ENCODE measurements at regions of chr9 and their contacts with region 1.

Region 1: GRCh38 chr9:99762470-99762869 is 59.2 kb upstream of the NR4A3 start:
- DNase-seq: no peak
- H3K4me3 Mint-ChIP-seq: no peak overlapping the region
- H3K27ac Mint-ChIP-seq: no peak overlapping the region
- H3K4me1 Mint-ChIP-seq: no peaks in the 10 kb centered on the region
- H3K27me3 Mint-ChIP-seq: peaks cover 9% of the 10 kb centered on the region

Region 2: GRCh38 chr9:99778308-99778707 is 15.8 kb after region 1 on chr9:
- intact Hi-C with region 1: loop called (anchors 2 kb)
- DNase-seq: no peak
- H3K4me3 Mint-ChIP-seq: no peak overlapping the region
- H3K27ac Mint-ChIP-seq: no peak overlapping the region
- H3K4me1 Mint-ChIP-seq: no peaks in the 10 kb centered on the region
- H3K27me3 Mint-ChIP-seq: peaks cover 8% of the 10 kb centered on the region

Measured in activated T-helper 1 cell treated with anti-CD3 and anti-CD28 coated beads, Interleukin-12 subunit alpha, Interleukin-12 subunit beta, Interleukin-2, Interleukin-4 antibody, amounts not matched to agents 30 ng/mL and 10 ng/mL and 1 ng/mL, durations not matched to agents 14 hours and 24 hours and 36 hours (primary cell).